Lower leg skin (tissue), 4 donors: ENCODE measurements at regions of chr4 and their contacts with region 1.

Region 1: DNA sequence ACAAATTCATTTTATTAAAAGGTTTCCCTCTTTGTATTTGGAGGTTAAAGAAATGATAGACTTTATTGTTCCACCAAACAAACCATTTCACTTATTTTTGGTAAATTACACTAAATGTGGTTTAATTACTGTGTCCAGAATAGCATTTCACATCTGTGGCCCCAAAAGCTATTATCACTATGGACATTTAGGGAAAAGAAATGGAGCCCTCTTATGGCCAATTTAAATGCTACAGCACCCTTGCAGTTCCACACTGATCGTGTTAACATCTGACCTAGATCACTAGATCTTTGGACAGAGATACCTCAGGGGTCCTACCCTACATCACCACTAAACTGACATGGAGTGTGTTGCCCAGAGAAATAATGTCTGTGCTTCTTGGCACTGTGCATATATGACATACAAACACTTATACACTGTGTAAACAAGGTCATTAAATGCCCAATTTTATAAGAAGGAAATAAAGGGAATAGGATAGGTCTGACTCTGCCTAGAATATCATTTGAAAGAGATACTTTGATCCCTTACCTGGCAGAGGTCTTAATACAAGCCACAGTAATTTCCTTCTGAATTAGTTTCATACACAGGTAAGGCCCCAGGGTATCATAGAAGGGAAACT is 163.9 kb downstream of the KDR start:
- DNase-seq: no peak
- H3K4me3 ChIP-seq: no peak overlapping the region
- CTCF ChIP-seq: peak in 1 of 3 donors; percentile 21
- POLR2A ChIP-seq: no peak

Region 2: DNA sequence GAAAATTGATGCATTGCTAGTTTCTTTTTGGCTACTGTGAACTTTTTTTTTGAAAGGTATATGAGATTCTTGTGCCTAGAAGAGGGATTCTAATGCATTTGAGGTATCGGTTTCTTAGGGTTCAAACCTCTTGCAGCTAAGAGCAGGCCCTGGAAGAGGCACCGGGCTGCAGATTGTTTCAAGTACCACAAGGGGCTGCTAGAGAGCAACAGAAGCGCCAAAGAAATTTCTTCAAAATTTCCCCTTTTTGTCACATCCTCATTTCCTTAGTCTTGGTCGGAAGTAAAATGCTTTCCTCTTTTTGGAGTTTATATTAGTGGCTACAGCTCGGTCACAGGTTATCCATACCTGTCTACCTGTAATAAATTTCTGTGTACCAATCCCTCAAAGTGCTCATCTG is 642.6 kb before region 1 on chr4:
- intact Hi-C with region 1: loop called (anchors 10 kb)
- DNase-seq: no peak
- H3K4me3 ChIP-seq: no peak overlapping the region
- CTCF ChIP-seq: no peak
- POLR2A ChIP-seq: no peak

Region 3: GRCh38 chr4:54941994-54942552 is 19.4 kb before region 1 on chr4:
- intact Hi-C with region 1: no loop called
- DNase-seq: no peak
- H3K4me3 ChIP-seq: no peak overlapping the region
- CTCF ChIP-seq: no peak
- POLR2A ChIP-seq: no peak

Region 4: GRCh38 chr4:55491486-55491885 is 530.0 kb after region 1 on chr4:
- intact Hi-C with region 1: no loop called
- DNase-seq: no peak
- H3K4me3 ChIP-seq: no peak overlapping the region
- CTCF ChIP-seq: no peak
- POLR2A ChIP-seq: no peak